ENCODE measurements at regions of chr7 and their contacts with region 1.

Region 1: GRCh38 chr7:102236592-102237287 is 49.9 kb upstream of the SH2B2 start:
- DNase-seq: peak; percentile 63
- ATAC-seq: peak; percentile 75
- H3K4me3 Mint-ChIP-seq: no peak overlapping the region
- H3K27ac Mint-ChIP-seq: no peak overlapping the region
- H3K4me1 Mint-ChIP-seq: no peaks in the 10 kb centered on the region
- H3K27me3 Mint-ChIP-seq: no peaks in the 10 kb centered on the region

Region 2: DNA sequence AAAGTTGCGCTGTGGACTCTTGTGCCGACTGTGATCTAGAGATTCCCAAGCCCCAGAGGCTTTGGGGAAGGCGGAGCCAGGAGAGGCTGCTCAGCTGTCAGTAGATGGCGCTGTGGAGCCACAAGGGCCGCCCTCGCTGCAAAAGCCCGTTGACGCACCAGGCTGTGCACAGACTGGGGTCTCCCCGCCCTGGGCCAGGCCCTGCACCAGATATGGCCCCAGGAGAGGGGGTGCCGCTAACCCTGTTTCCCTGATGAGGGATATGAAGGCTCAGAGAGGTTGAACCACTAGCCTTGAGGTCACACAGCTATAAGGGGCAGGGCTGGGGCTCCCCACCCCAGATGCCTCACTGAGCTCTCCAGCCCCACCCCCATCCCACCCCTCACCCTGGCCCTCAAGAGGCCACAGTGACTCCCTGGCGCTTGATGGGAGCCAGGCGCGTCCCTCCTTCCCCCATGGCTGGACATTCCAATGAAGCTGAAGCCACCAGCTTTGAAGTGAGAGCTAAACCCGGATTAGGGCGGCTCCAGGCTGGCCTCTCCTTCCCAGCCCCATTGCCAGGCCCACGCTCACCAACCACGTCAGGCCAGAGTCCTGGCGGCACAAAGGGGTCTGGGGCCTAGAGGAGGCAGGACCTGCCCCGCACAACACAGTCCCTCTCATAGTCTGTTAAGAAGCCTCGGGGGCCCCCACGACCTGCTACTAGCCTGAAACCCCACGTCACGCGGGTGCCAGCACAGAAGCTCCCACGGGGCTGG is 634.1 kb before region 1 on chr7:
- CTCF ChIA-PET with region 1: interaction called, 15 read pairs
- POLR2A ChIA-PET with region 1: no interaction called
- DNase-seq: peak; percentile 76
- ATAC-seq: peak; percentile 89
- H3K4me3 Mint-ChIP-seq: no peak overlapping the region
- H3K27ac Mint-ChIP-seq: no peak overlapping the region
- H3K4me1 Mint-ChIP-seq: no peaks in the 10 kb centered on the region
- H3K27me3 Mint-ChIP-seq: no peaks in the 10 kb centered on the region

Region 3: DNA sequence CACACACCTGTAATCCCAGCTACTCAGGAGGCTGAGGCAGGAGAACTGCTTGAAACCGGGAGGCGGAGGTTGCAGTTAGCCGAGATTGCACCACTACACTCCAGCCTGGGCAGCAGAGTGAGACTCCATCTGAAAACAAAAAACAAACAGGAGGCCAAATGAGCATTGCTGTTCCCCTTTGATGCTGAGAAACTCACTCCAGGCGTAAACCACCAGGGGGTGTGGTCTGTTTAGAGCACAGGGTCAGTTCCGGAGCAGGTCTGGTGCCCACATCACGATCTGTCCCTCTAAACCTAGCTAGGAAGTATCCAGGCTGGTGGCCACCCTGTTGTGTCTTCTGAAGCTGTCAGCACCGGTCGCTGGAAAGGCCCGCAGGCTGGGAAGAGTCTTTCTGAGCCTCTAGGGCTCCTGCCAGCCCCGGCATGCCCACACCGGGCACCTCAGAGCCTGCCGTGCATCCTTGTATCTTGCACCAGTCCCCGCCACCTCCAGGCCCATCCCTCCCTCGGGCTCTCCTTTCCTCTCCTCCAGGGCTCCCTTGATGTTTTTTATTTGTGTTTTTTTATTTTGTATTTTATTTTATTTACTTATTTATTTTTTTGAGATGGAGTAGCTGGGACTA is 16.4 kb before region 1 on chr7:
- CTCF ChIA-PET with region 1: no interaction called
- POLR2A ChIA-PET with region 1: no interaction called
- DNase-seq: no peak
- ATAC-seq: no peak
- H3K4me3 Mint-ChIP-seq: no peak overlapping the region
- H3K27ac Mint-ChIP-seq: no peak overlapping the region
- H3K4me1 Mint-ChIP-seq: peaks cover 5% of the 10 kb centered on the region
- H3K27me3 Mint-ChIP-seq: no peaks in the 10 kb centered on the region

Measured in activated CD8-positive, alpha-beta T cell treated with anti-CD3 and anti-CD28 coated beads, Interleukin-2, amount 10 ng/mL, durations not matched to agents 7 days and 5 days (primary cell).